ENCODE measurements at regions of chr19 and their contacts with region 1.

Region 1: DNA sequence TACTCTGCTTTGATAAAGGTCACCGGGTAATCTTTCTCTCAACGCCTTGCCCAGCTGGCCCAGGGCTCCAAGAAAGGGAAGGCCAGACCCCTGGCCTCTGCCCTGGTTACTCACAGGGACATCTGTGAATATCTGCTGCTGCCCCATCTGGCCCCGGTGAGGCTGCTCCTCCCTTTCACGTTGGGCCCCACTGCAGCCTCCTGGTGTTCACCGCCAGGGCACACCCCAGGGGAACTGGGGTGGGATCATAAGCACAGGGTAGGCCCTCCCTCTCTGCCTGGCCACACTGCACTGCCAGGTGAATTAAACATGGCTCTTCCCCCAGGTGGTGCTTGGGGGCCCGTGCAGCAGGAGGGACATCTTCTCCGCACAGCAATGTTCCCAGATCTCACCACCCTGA is 12.7 kb downstream of the LAIR1 start:
- DNase-seq: no peak
- ATAC-seq: peak; percentile 59
- H3K4me3 ChIP-seq: no peak overlapping the region
- H3K27ac ChIP-seq: no peak overlapping the region
- H3K4me1 ChIP-seq: no peaks in the 10 kb centered on the region
- H3K27me3 ChIP-seq: no peaks in the 10 kb centered on the region
- CTCF ChIP-seq: no peak
- EP300 ChIP-seq: no peak
- POLR2A ChIP-seq: no peak
- RAD21 ChIP-seq: no peak

Region 2: GRCh38 chr19:54266133-54266532 is 85.9 kb before region 1 on chr19:
- CTCF ChIA-PET with region 1: interaction called, 24 read pairs
- POLR2A ChIA-PET with region 1: no interaction called
- RAD21 ChIA-PET with region 1: no interaction called
- SMC1A ChIA-PET with region 1: interaction called, 3 read pairs
- in situ Hi-C with region 1: no loop called
- intact Hi-C with region 1: no loop called
- DNase-seq: peak; percentile 19
- ATAC-seq: peak; percentile 90
- H3K4me3 ChIP-seq: no peak overlapping the region
- H3K27ac ChIP-seq: no peak overlapping the region
- H3K4me1 ChIP-seq: no peaks in the 10 kb centered on the region
- H3K27me3 ChIP-seq: peaks cover 0 to 3% of the 10 kb centered on the region in 2 experiments; a peak in 1 of 4 replicates
- CTCF ChIP-seq: peak; percentile 75 to 87 (median 77)
- EP300 ChIP-seq: no peak
- POLR2A ChIP-seq: no peak
- RAD21 ChIP-seq: peak; percentile 58; the same call in 1 of the 2 replicates

Region 3: GRCh38 chr19:54339646-54340358 is 12.2 kb before region 1 on chr19:
- CTCF ChIA-PET with region 1: interaction called, 15 read pairs
- POLR2A ChIA-PET with region 1: interaction called, 5 read pairs
- RAD21 ChIA-PET with region 1: no interaction called
- SMC1A ChIA-PET with region 1: interaction called, 3 read pairs
- in situ Hi-C with region 1: no loop called
- intact Hi-C with region 1: no loop called
- DNase-seq: no peak
- ATAC-seq: peak; percentile 71
- H3K4me3 ChIP-seq: no peak overlapping the region
- H3K27ac ChIP-seq: no peak overlapping the region
- H3K4me1 ChIP-seq: no peaks in the 10 kb centered on the region
- H3K27me3 ChIP-seq: 0 out of 4 replicates have a peak, but pooled peaks cover 0 to 2% of the 10 kb centered on the region in 2 experiments
- CTCF ChIP-seq: no peak
- EP300 ChIP-seq: no peak
- POLR2A ChIP-seq: no peak
- RAD21 ChIP-seq: no peak